Left colon (tissue), 2 donors: ENCODE measurements at regions of chr2 and their contacts with region 1.

Region 1: DNA sequence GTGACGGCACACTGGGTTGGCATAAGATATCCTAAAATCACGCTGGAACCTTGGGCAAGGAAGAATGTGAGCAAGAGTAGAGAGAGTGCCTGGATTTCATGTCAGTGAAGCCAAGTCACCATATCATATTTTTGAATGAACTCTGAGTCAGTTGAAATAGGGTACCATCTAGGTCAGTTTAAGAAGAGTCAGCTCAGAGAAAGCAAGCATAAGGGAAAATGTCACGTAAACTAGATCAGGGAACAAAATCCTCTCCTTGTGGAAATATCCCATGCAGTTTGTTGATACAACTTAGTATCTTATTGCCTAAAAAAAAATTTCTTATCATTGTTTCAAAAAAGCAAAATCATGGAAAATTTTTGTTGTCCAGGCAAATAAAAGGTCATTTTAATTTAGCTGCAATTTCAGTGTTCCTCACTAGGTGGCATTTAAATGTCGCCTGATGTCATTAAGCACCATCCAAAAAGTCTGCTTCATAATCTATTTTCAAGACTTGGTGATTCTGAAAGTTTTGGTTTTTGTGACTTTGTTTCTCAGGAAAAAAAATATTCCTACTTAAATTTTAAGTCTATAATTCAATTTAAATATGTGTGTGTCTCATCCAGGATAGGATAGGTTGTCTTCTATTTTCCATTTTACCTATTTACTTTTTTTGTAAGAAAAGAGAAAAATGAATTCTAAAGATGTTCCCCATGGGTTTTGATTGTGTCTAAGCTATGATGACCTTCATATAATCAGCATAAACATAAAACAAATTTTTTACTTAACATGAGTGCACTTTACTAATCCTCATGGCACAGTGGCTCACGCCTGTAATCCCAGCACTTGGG is 19.6 kb downstream of the RSAD2 start:
- DNase-seq: no peak
- ATAC-seq: peak; percentile 47

Region 2: GRCh38 chr2:7044261-7045250 is 147.4 kb after region 1 on chr2:
- intact Hi-C with region 1: loop called in 1 of 2 experiments (anchors 5 kb)
- DNase-seq: peak in 1 of 2 donors; percentile 69
- ATAC-seq: peak; percentile 79